SK-N-SH (cell line): ENCODE measurements at regions of chr15 and their contacts with region 1.

Region 1: GRCh38 chr15:50424066-50424890 is at the start of gene USP8:
- DNase-seq: peak; percentile 94
- H3K4me3 ChIP-seq: peak within 1 kb of the TSS; percentile 80 to 98
- H3K27ac ChIP-seq: peak within 1 kb of the TSS; percentile 86 to 90
- H3K4me1 ChIP-seq: peaks cover 0 to 2% of the 10 kb centered on the region in 2 experiments; a peak in 2 of 4 replicates
- H3K27me3 ChIP-seq: no peaks in the 10 kb centered on the region
- CTCF ChIP-seq: no peak
- EP300 ChIP-seq: no peak
- RAD21 ChIP-seq: no peak
- polyA plus RNA-seq, gene USP8: 23.4 and 31.3 TPM in 2 replicates

Region 2: DNA sequence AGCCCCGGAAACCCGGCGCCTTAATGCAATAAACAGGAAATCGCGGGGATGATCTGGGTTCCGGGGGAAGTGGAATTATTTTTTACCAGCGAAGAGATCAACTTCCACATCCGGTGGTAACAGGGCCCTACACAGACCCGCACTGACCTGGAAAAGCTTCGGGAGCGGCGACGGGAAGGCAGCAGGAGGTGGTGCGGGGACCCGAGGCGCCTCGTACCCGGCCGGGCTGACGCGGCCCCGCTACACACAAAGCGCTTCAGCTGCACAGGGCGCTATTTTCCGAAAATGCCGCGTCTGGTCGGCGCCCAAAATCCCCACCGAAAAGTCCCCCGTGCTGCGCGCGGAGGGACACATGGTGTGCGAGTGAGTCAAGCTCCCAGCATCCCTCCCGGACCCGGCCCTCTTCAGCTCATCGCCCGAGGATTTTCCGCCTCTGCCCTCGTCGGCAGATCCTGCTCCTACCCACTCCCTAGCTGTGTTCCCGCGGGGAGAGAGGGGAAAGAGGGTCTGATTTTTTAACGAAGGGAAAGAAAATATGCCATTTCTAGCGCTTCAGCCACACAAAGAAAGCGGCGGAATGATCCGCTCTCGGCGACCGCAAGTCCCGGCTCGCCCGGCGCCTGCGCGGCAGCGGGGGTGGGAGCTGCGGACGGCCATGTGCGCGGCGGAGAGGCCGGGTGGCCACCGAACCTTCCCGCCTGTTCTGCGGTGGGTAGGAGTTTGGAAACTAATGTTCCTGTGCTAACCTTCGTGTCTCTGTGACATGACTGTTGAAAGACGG is 69.2 kb before region 1 on chr15 and contains the start of gene GABPB1:
- CTCF ChIA-PET with region 1: no interaction called
- POLR2A ChIA-PET with region 1: interaction called, 17 read pairs
- DNase-seq: peak; percentile 95
- H3K4me3 ChIP-seq: peak within 1 kb of the TSS; percentile 73 to 98
- H3K27ac ChIP-seq: peak within 1 kb of the TSS; percentile 97 to 100
- H3K4me1 ChIP-seq: peaks cover 9 to 16% of the 10 kb centered on the region in 2 experiments; a peak in 3 of 4 replicates
- H3K27me3 ChIP-seq: no peaks in the 10 kb centered on the region
- CTCF ChIP-seq: no peak
- EP300 ChIP-seq: no peak
- RAD21 ChIP-seq: no peak
- polyA plus RNA-seq, gene GABPB1: 12.8 and 14.2 TPM in 2 replicates